Activated naive CD4-positive, alpha-beta T cell treated with anti-CD3 and anti-CD28 coated beads for 36 hours (primary cell): ENCODE measurements at regions of chr5 and their contacts with region 1.

Region 1: GRCh38 chr5:98069876-98070512 is 703.5 kb upstream of the RGMB start:
- DNase-seq: no peak
- H3K4me3 Mint-ChIP-seq: no peak overlapping the region
- H3K27ac Mint-ChIP-seq: no peak overlapping the region
- H3K4me1 Mint-ChIP-seq: peaks cover 8% of the 10 kb centered on the region
- H3K27me3 Mint-ChIP-seq: peaks cover 6% of the 10 kb centered on the region

Region 2: DNA sequence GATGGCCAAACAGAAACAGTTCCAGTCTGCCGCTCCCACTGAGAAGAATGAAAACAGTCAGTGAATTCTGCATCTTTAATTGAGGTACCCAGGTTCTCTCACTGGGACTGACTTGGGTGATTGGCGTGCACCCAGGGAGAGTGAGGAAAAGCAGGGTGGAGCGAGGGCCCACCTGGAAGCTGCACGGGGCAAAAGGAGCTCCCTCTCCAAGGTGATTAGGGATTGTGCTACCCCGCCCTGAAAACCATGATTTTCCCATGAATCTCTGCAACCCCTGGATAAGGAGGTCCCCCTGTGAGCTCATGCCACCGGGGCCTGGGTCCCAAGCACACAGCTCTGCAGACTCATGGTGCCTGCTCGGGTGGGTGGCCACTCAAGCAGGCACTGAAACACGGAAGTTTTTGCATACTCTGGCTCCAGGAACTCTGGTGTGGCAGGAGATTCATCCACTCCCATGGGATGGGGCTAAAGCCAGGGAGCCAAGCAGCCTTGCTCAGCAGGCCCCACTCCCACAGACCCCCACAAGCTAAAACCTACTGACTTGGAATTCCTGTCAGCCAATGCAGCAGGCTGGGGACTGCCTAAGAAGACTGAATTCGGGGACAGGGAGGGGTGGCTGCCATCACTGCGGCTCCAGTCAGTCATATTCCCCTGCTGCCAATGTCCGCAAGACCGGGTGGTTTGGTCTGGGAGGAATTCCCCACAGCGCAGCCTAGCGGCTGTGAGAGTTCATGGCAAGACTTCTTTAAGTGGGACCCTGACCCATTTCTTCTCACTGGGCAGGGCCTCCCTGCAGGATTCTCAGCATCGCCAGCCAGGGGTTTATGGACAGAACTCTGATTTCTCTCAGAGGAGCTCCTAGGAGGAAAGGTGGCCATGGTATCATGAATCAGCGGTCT is 51.3 kb after region 1 on chr5:
- CTCF ChIA-PET with region 1: no interaction called
- intact Hi-C with region 1: no loop called
- DNase-seq: no peak
- H3K4me3 Mint-ChIP-seq: no peak overlapping the region
- H3K27ac Mint-ChIP-seq: no peak overlapping the region
- H3K4me1 Mint-ChIP-seq: no peaks in the 10 kb centered on the region
- H3K27me3 Mint-ChIP-seq: no peaks in the 10 kb centered on the region

Region 3: DNA sequence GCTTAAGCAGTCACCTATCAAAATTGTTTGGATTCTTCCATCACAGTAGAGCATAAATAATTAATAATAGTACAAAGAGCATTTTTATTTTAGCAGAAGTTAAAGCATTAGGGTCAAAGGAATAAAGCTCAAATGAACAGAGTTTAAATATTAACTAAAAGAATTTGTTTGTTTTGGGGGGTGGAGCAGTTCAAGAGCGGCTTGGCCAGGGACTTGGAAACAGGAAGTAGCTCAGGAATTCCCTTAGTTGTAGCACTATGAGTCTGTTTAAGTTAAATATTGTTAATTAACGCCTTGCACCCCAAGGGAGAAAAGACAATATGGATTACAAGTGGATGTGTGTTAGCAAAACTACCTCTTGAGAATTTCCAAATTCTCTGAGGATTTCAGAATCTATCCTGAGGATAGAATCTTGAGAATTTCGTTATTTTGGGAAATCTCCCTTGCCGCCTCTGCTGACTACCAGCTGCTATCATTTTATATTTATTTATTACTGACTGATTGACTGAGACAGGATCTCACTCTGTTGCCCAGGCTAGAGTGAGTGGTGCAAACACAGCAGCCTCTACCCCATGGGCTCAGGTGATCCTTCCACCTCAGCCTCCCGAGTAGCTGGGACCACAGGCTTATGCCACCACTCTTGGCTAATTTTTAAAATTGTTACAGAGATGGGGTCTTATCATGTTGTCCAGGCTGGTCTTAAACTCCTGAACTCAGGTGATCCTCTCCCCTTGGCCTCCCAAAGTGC is 955.5 kb after region 1 on chr5:
- CTCF ChIA-PET with region 1: no interaction called
- intact Hi-C with region 1: loop called (anchors 2 kb)
- DNase-seq: no peak
- H3K4me3 Mint-ChIP-seq: no peak overlapping the region
- H3K27ac Mint-ChIP-seq: no peak overlapping the region
- H3K4me1 Mint-ChIP-seq: peaks cover 34% of the 10 kb centered on the region
- H3K27me3 Mint-ChIP-seq: peaks cover 4% of the 10 kb centered on the region